CD4-positive, alpha-beta memory T cell (primary cell): ENCODE measurements at regions of chr2 and their contacts with region 1.

Region 1: DNA sequence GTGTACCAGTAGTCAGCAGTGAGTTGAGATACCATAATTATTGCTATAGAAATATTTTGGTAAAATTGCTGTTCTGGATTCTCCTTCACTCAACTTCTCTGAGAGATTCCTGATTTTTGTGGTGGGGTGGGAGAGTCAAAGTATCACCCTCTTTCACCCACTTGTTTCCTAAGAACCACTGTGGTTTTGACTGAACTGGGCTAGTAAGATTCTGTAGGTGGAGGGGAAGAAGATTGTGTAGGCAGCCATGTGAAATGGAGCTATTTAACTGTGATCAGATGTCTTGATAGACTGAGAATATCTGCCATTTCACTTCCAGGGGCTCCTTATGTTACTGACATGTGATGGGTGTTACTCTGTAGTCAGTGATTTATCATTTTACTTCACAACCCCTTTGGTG is 45.3 kb downstream of the BIRC6 start:
- DNase-seq: no peak
- H3K4me3 ChIP-seq: no peak overlapping the region
- H3K4me3 Mint-ChIP-seq: no peak overlapping the region
- H3K27ac ChIP-seq: no peak overlapping the region
- H3K27ac Mint-ChIP-seq: peak overlapping the region in 5 of 7 donors; percentile 6 to 79 (median 30)
- H3K4me1 ChIP-seq: no peaks in the 10 kb centered on the region
- H3K4me1 Mint-ChIP-seq: peaks cover 0 to 12% (median 7%) of the 10 kb centered on the region in 4 donors
- H3K27me3 ChIP-seq: no peaks in the 10 kb centered on the region
- H3K27me3 Mint-ChIP-seq: no peaks in the 10 kb centered on the region

Region 2: GRCh38 chr2:32384529-32384928 is 17.6 kb before region 1 on chr2:
- CTCF ChIA-PET with region 1: no interaction called
- POLR2A ChIA-PET with region 1: no interaction called
- intact Hi-C with region 1: loop called (anchors 1 kb)
- DNase-seq: no peak
- H3K4me3 ChIP-seq: no peak overlapping the region
- H3K4me3 Mint-ChIP-seq: no peak overlapping the region
- H3K27ac ChIP-seq: no peak overlapping the region
- H3K27ac Mint-ChIP-seq: peak overlapping the region in 1 of 7 donors; percentile 5
- H3K4me1 ChIP-seq: no peaks in the 10 kb centered on the region
- H3K4me1 Mint-ChIP-seq: peaks cover 16 to 23% (median 20%) of the 10 kb centered on the region in 4 donors
- H3K27me3 ChIP-seq: no peaks in the 10 kb centered on the region
- H3K27me3 Mint-ChIP-seq: no peaks in the 10 kb centered on the region